Mammary epithelial cell (primary cell): ENCODE measurements at regions of chr2 and their contacts with region 1.

Region 1: GRCh38 chr2:149814049-149814448 is 226.5 kb upstream of the MMADHC start:
- DNase-seq: no peak
- H3K4me3 ChIP-seq: no peak overlapping the region
- H3K27ac ChIP-seq: no peak overlapping the region
- H3K4me1 ChIP-seq: no peaks in the 10 kb centered on the region
- H3K27me3 ChIP-seq: no peaks in the 10 kb centered on the region
- CTCF ChIP-seq: no peak

Region 2: DNA sequence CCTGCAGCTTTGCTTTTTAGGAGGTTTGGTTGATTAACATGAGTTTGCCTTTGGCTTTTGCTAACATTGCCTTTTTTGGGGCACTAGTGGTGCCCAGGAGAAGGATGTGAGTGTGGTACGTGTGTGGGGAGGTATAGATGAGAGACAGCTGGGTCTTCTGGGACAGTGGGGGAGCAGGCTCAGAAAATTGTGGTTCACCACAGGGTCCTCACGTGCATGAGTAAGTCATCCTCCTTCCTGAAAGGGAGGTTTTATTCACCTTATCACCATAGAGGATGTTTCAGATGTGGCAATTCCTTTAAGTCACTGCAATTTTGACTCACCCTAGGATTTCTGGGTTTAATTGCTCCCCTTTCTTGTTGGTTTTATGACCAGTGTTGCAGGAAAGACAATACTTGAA is 646.6 kb before region 1 on chr2:
- CTCF ChIA-PET with region 1: no interaction called
- dilution Hi-C with region 1: no loop called
- in situ Hi-C with region 1: no loop called
- intact Hi-C with region 1: no loop called
- DNase-seq: peak; percentile 58
- H3K4me3 ChIP-seq: no peak overlapping the region
- H3K27ac ChIP-seq: no peak overlapping the region
- H3K4me1 ChIP-seq: peaks cover 43% of the 10 kb centered on the region
- H3K27me3 ChIP-seq: no peaks in the 10 kb centered on the region
- CTCF ChIP-seq: no peak

Region 3: GRCh38 chr2:150911766-150912280 is 1097.8 kb after region 1 on chr2:
- CTCF ChIA-PET with region 1: no interaction called
- dilution Hi-C with region 1: no loop called
- in situ Hi-C with region 1: no loop called
- intact Hi-C with region 1: loop called (anchors 5 kb)
- DNase-seq: peak; percentile 70
- H3K4me3 ChIP-seq: no peak overlapping the region
- H3K27ac ChIP-seq: peak overlapping the region; percentile 30
- H3K4me1 ChIP-seq: peaks cover 19% of the 10 kb centered on the region
- H3K27me3 ChIP-seq: no peaks in the 10 kb centered on the region
- CTCF ChIP-seq: peak in 1 of 2 donors; percentile 36